Naive thymus-derived CD4-positive, alpha-beta T cell (primary cell): ENCODE measurements at regions of chr6 and their contacts with region 1.

Region 1: GRCh38 chr6:42928986-42929820 is at the start of gene CNPY3:
- DNase-seq: peak; percentile 80 to 96 (median 95)
- ATAC-seq: peak; percentile 90
- H3K4me3 ChIP-seq: peak within 1 kb of the TSS; percentile 80
- H3K4me3 Mint-ChIP-seq: peak within 1 kb of the TSS; percentile 86 to 99 (median 98)
- H3K27ac ChIP-seq: peak within 1 kb of the TSS; percentile 95
- H3K27ac Mint-ChIP-seq: peak within 1 kb of the TSS; percentile 96 to 100 (median 99)
- H3K4me1 ChIP-seq: peaks cover 33% of the 10 kb centered on the region in 2 donors
- H3K4me1 Mint-ChIP-seq: peaks cover 34 to 53% (median 43%) of the 10 kb centered on the region in 7 donors
- H3K27me3 ChIP-seq: no peaks in the 10 kb centered on the region
- H3K27me3 Mint-ChIP-seq: no peaks in the 10 kb centered on the region
- total RNA-seq, gene CNPY3: 58.6 to 98.9 (median 87.4) TPM

Region 2: DNA sequence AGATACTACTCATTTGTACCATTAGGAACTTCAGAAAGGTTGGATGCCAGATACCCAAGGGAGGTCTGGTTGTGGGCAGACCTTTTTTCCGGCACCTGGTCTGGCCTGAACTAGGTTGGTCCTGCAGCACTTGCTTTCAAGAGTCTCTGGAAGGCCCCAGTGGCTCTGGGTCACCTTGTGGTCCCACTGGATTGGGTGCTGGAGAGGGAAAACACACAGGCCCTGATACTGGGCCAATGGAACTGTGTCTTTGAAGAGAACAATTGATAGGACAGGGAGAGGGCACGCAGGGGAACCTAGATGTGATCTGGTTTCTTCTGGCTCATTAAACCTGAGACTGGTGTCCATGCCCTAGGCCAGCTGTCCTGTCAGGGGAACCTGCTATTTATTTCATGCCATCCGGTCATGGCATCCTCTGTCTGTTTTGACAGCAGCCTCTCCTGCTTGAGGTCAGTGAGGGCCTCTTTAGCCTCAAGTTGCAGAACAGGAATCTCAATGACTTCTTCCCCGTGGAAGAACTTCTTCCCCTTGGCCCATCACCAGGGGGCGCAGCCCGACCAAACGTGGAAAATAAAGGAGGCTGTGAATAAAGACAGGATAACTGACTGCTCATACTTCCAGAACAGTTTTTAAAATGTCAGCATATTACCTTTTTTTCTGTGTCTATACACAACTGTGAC is 853.9 kb before region 1 on chr6:
- CTCF ChIA-PET with region 1: no interaction called
- POLR2A ChIA-PET with region 1: no interaction called
- intact Hi-C with region 1: no loop called
- DNase-seq: peak in 8 of 9 donors; percentile 30 to 69 (median 36)
- ATAC-seq: no peak
- H3K4me3 ChIP-seq: no peak overlapping the region
- H3K4me3 Mint-ChIP-seq: no peak overlapping the region
- H3K27ac ChIP-seq: no peak overlapping the region
- H3K27ac Mint-ChIP-seq: peak overlapping the region in 6 of 9 donors; percentile 17 to 69 (median 52)
- H3K4me1 ChIP-seq: no peaks in the 10 kb centered on the region
- H3K4me1 Mint-ChIP-seq: peaks cover 0 to 12% (median 4%) of the 10 kb centered on the region in 7 donors
- H3K27me3 ChIP-seq: no peaks in the 10 kb centered on the region
- H3K27me3 Mint-ChIP-seq: no peaks in the 10 kb centered on the region

Region 3: GRCh38 chr6:42726485-42727086 is 202.6 kb before region 1 on chr6:
- CTCF ChIA-PET with region 1: no interaction called
- POLR2A ChIA-PET with region 1: interaction called, 12 read pairs
- intact Hi-C with region 1: no loop called
- DNase-seq: peak; percentile 20 to 87 (median 80)
- ATAC-seq: peak; percentile 99
- H3K4me3 ChIP-seq: peak overlapping the region; percentile 84
- H3K4me3 Mint-ChIP-seq: peak overlapping the region; percentile 76 to 96 (median 90)
- H3K27ac ChIP-seq: peak overlapping the region; percentile 74
- H3K27ac Mint-ChIP-seq: peak overlapping the region; percentile 89 to 99 (median 98)
- H3K4me1 ChIP-seq: peaks cover 6 to 14% of the 10 kb centered on the region in 2 donors
- H3K4me1 Mint-ChIP-seq: peaks cover 9 to 25% (median 20%) of the 10 kb centered on the region in 7 donors
- H3K27me3 ChIP-seq: no peaks in the 10 kb centered on the region
- H3K27me3 Mint-ChIP-seq: peaks cover 0 to 1% (median 0%) of the 10 kb centered on the region in 5 donors

Region 4: GRCh38 chr6:42901536-42901957 is 27.7 kb before region 1 on chr6:
- CTCF ChIA-PET with region 1: interaction called, 6 read pairs
- POLR2A ChIA-PET with region 1: interaction called, 6 read pairs
- intact Hi-C with region 1: loop called (anchors 1 kb)
- DNase-seq: peak; percentile 34 to 82 (median 76)
- ATAC-seq: peak; percentile 100
- H3K4me3 ChIP-seq: no peak overlapping the region
- H3K4me3 Mint-ChIP-seq: peak overlapping the region in 1 of 10 donors; percentile 65
- H3K27ac ChIP-seq: no peak overlapping the region
- H3K27ac Mint-ChIP-seq: peak overlapping the region in 1 of 9 donors; percentile 18
- H3K4me1 ChIP-seq: no peaks in the 10 kb centered on the region
- H3K4me1 Mint-ChIP-seq: peaks cover 0 to 17% (median 5%) of the 10 kb centered on the region in 7 donors
- H3K27me3 ChIP-seq: no peaks in the 10 kb centered on the region
- H3K27me3 Mint-ChIP-seq: peaks cover 0 to 6% (median 0%) of the 10 kb centered on the region in 5 donors

Region 5: GRCh38 chr6:42978839-42979522 is 49.8 kb after region 1 on chr6 and contains the start of gene PEX6:
- CTCF ChIA-PET with region 1: interaction called, 4 read pairs
- POLR2A ChIA-PET with region 1: interaction called, 94 read pairs
- intact Hi-C with region 1: loop called (anchors 1 kb)
- DNase-seq: peak; percentile 77 to 98 (median 93)
- ATAC-seq: peak; percentile 97
- H3K4me3 ChIP-seq: peak within 1 kb of the TSS; percentile 90
- H3K4me3 Mint-ChIP-seq: peak within 1 kb of the TSS; percentile 91 to 99 (median 94)
- H3K27ac ChIP-seq: peak within 1 kb of the TSS; percentile 85
- H3K27ac Mint-ChIP-seq: peak within 1 kb of the TSS; percentile 92 to 99 (median 98)
- H3K4me1 ChIP-seq: peaks cover 30 to 32% of the 10 kb centered on the region in 2 donors
- H3K4me1 Mint-ChIP-seq: peaks cover 19 to 61% (median 47%) of the 10 kb centered on the region in 7 donors
- H3K27me3 ChIP-seq: no peaks in the 10 kb centered on the region
- H3K27me3 Mint-ChIP-seq: no peaks in the 10 kb centered on the region
- total RNA-seq, gene PEX6: 14.1 to 42.3 (median 28.0) TPM

Region 6: DNA sequence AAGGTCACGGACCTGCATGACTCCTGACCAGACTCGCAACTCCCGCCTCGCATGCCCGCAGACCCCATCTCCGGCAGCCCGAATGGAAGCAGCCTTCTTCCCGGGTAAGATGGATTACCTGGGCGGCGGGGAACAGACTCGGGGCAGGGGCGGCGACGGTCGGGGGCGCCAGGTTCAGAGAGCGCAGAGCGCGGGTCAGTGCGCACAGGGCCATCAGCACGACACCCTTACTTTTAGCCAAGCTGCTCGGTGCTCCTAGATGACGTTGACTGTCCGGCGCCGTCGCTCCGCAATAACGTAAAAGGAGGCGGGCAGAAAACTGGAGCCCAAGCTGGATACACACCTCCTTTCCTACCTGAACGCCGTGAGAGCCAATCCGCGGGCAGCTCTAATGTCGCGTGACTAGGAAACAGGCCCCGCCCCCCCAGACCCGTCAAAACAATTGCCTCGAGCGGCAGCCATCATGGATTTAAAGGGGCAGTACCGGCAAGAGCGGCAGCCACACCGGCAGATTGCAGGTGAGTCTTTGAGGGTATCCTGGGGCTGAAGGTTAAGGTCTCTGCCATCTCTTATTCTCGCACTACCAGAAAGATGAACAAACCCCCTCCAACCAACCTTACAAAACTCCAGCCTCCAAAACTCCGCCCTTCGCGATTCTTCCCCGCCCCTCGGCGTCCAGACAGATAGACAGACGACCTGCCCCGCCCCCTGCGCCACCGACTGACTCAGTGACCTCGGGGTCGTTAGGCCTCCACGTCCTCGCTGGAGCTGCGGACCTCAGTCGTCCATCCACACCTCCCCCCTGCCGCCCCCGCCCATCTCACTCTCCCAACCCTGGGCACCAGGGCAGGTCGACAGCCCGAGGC is 130.2 kb after region 1 on chr6 and contains the starts of genes KLC4 and MRPL2:
- CTCF ChIA-PET with region 1: interaction called, 3 read pairs
- POLR2A ChIA-PET with region 1: interaction called, 34 read pairs
- intact Hi-C with region 1: loop called (anchors 1 kb)
- DNase-seq: peak; percentile 79 to 98 (median 95)
- ATAC-seq: peak; percentile 99
- H3K4me3 ChIP-seq: peak within 1 kb of the TSS; percentile 80
- H3K4me3 Mint-ChIP-seq: peak within 1 kb of the TSS; percentile 88 to 100 (median 96)
- H3K27ac ChIP-seq: peak within 1 kb of the TSS; percentile 88
- H3K27ac Mint-ChIP-seq: peak within 1 kb of the TSS; percentile 95 to 100 (median 99)
- H3K4me1 ChIP-seq: peaks cover 0 to 21% of the 10 kb centered on the region in 2 donors
- H3K4me1 Mint-ChIP-seq: peaks cover 28 to 50% (median 45%) of the 10 kb centered on the region in 7 donors
- H3K27me3 ChIP-seq: no peaks in the 10 kb centered on the region
- H3K27me3 Mint-ChIP-seq: no peaks in the 10 kb centered on the region
- total RNA-seq, gene KLC4: 16.5 to 56.9 (median 42.5) TPM
- total RNA-seq, gene MRPL2: 32.0 to 57.5 (median 47.7) TPM

Region 7: DNA sequence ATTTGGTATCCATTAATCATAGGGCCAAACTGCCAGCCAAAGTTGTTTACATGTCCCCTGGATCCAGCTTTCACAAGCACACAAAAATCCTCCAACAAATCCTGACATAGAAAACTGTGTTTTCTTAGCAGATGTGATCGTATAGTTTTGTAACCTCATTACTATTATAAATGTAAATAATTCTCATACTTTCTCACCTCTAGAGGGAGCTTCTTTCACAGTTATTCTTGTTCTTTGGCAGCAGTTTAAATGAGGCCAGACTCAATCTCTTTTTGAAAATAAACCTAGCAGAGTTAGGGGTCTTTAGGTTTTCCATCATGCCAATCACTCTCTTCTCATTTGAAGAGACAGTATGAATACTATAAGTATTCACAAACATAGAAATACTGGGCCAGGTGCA is 457.3 kb after region 1 on chr6:
- CTCF ChIA-PET with region 1: no interaction called
- POLR2A ChIA-PET with region 1: interaction called, 4 read pairs
- intact Hi-C with region 1: loop called in 1 of 2 experiments (anchors 5 kb)
- DNase-seq: peak in 3 of 9 donors; percentile 43 to 64 (median 44)
- ATAC-seq: no peak
- H3K4me3 ChIP-seq: no peak overlapping the region
- H3K4me3 Mint-ChIP-seq: peak overlapping the region in 4 of 10 donors; percentile 23 to 63 (median 40)
- H3K27ac ChIP-seq: no peak overlapping the region
- H3K27ac Mint-ChIP-seq: peak overlapping the region in 8 of 9 donors; percentile 6 to 95 (median 73)
- H3K4me1 ChIP-seq: peaks cover 46 to 59% of the 10 kb centered on the region in 2 donors
- H3K4me1 Mint-ChIP-seq: peaks cover 54 to 78% (median 72%) of the 10 kb centered on the region in 7 donors
- H3K27me3 ChIP-seq: no peaks in the 10 kb centered on the region
- H3K27me3 Mint-ChIP-seq: peaks cover 0 to 67% (median 4%) of the 10 kb centered on the region in 5 donors